ENCODE measurements at regions of chr12 and their contacts with region 1.

Region 1: DNA sequence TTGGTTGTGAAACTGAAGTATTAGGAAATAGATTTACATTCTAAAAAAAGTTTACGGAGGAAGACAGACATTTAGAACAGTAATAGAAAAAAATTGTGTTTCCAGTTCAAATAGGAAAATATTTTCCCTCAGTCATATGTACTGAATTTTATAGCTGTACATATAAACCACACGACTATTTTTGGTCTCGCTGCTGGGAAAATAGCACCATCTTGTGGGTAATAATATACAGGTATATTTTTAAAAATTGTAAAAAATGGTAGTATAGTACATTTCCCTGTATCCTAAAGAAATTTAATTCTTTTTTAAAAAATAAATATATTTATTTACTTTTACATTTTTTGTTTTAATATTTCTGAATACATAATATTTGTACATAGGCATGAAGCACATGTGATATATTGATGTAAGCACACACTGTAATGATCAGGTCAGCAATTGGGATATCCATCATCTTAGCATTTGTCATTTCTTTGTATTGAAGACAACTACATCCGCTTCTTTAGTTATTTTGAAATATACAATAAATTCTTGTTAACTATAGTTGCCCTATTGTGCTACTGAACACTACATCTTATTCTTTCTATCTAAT is 168.6 kb downstream of the ALX1 start:
- DNase-seq: no peak
- H3K4me3 Mint-ChIP-seq: no peak overlapping the region
- H3K27ac Mint-ChIP-seq: no peak overlapping the region
- H3K4me1 Mint-ChIP-seq: no peaks in the 10 kb centered on the region
- H3K27me3 Mint-ChIP-seq: no peaks in the 10 kb centered on the region

Region 2: GRCh38 chr12:85076688-85077430 is 371.8 kb before region 1 on chr12:
- CTCF ChIA-PET with region 1: no interaction called
- intact Hi-C with region 1: loop called (anchors 2 kb)
- DNase-seq: no peak
- H3K4me3 Mint-ChIP-seq: no peak overlapping the region
- H3K27ac Mint-ChIP-seq: no peak overlapping the region
- H3K4me1 Mint-ChIP-seq: no peaks in the 10 kb centered on the region
- H3K27me3 Mint-ChIP-seq: no peaks in the 10 kb centered on the region